WTC11 (cell line): ENCODE measurements at regions of chr5 and their contacts with region 1.

Region 1: GRCh38 chr5:173629628-173630027 is 13.2 kb upstream of the BOD1 start:
- DNase-seq: peak; percentile 81
- ATAC-seq: peak; percentile 80
- H3K4me3 Mint-ChIP-seq: no peak overlapping the region
- H3K27ac Mint-ChIP-seq: no peak overlapping the region
- H3K4me1 Mint-ChIP-seq: peaks cover 52% of the 10 kb centered on the region
- H3K27me3 Mint-ChIP-seq: no peaks in the 10 kb centered on the region
- CTCF ChIP-seq: peak; percentile 75

Region 2: GRCh38 chr5:173615884-173616576 is 13.6 kb before region 1 on chr5:
- CTCF ChIA-PET with region 1: interaction called, 10 read pairs
- POLR2A ChIA-PET with region 1: interaction called, 4 read pairs
- DNase-seq: peak; percentile 64
- ATAC-seq: peak; percentile 29
- H3K4me3 Mint-ChIP-seq: peak overlapping the region; percentile 92
- H3K27ac Mint-ChIP-seq: peak overlapping the region; percentile 86
- H3K4me1 Mint-ChIP-seq: peaks cover 45% of the 10 kb centered on the region
- H3K27me3 Mint-ChIP-seq: no peaks in the 10 kb centered on the region
- CTCF ChIP-seq: no peak

Region 3: GRCh38 chr5:173643963-173644362 is 14.3 kb after region 1 on chr5:
- CTCF ChIA-PET with region 1: interaction called, 50 read pairs
- POLR2A ChIA-PET with region 1: interaction called, 5 read pairs
- DNase-seq: peak; percentile 79
- ATAC-seq: peak; percentile 86
- H3K4me3 Mint-ChIP-seq: no peak overlapping the region
- H3K27ac Mint-ChIP-seq: no peak overlapping the region
- H3K4me1 Mint-ChIP-seq: peaks cover 63% of the 10 kb centered on the region
- H3K27me3 Mint-ChIP-seq: peaks cover 9% of the 10 kb centered on the region
- CTCF ChIP-seq: no peak

Region 4: DNA sequence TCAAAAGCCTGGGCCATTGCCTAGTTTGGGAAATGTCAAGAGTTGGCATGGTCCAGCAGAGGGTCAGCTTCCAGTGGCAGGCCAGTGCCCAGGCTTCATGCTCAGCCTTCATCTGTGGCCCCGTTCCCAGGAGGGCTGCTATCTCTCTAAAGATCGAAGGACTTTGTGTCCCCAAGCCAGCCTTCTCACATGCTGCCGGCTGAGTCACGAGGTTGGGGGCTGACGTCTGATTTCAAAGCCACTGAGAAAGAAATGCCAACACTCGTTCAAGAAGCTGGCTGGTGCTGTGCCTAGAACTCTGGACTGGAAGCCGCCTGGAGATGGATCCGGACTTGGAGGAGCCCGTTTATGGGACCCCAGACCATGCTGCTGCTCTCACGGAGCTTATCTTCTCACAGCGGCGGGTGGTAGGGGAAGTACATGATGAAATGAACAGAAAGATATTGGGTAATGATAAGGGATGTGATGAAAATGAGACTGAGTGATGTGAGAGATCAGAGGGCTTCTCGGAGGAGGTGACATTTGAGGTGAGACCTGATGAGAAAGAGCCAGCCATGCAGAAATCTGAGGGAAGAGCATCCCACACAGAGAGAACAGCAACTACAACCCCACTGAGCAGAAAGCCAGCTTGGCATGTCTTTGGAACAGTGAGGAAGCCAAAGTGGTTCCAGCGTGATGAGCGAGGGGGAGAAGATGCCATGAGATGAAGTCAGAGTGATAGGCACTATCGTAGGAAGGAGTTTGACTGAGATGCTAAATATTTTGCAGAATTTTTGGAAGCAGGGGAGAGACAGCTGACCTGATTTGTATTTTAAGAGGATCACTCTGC is 41.7 kb after region 1 on chr5:
- CTCF ChIA-PET with region 1: interaction called, 16 read pairs
- POLR2A ChIA-PET with region 1: no interaction called
- DNase-seq: no peak
- ATAC-seq: no peak
- H3K4me3 Mint-ChIP-seq: 0 out of 2 replicates have a peak overlapping the region, but pooled peaks have one; percentile 13
- H3K27ac Mint-ChIP-seq: peak overlapping the region; percentile 48
- H3K4me1 Mint-ChIP-seq: peaks cover 69% of the 10 kb centered on the region
- H3K27me3 Mint-ChIP-seq: peaks cover 25% of the 10 kb centered on the region
- CTCF ChIP-seq: no peak

Region 5: GRCh38 chr5:173721256-173722232 is 91.9 kb after region 1 on chr5:
- CTCF ChIA-PET with region 1: interaction called, 15 read pairs
- POLR2A ChIA-PET with region 1: no interaction called
- DNase-seq: no peak
- ATAC-seq: peak; percentile 48
- H3K4me3 Mint-ChIP-seq: no peak overlapping the region
- H3K27ac Mint-ChIP-seq: no peak overlapping the region
- H3K4me1 Mint-ChIP-seq: peaks cover 37% of the 10 kb centered on the region
- H3K27me3 Mint-ChIP-seq: no peaks in the 10 kb centered on the region
- CTCF ChIP-seq: no peak

Region 6: GRCh38 chr5:173984218-173984617 is 354.6 kb after region 1 on chr5:
- CTCF ChIA-PET with region 1: interaction called, 17 read pairs
- POLR2A ChIA-PET with region 1: no interaction called
- DNase-seq: no peak
- ATAC-seq: peak; percentile 82
- H3K4me3 Mint-ChIP-seq: no peak overlapping the region
- H3K27ac Mint-ChIP-seq: no peak overlapping the region
- H3K4me1 Mint-ChIP-seq: peaks cover 16% of the 10 kb centered on the region
- H3K27me3 Mint-ChIP-seq: no peaks in the 10 kb centered on the region
- CTCF ChIP-seq: peak; percentile 40; the same call in 1 of the 2 replicates